ENCODE measurements at regions of chr16 and their contacts with region 1.

Region 1: GRCh38 chr16:3443108-3444031 is at the starts of genes NAA60 and ZNF597:
- DNase-seq: peak; percentile 84
- H3K4me3 ChIP-seq: peak within 1 kb of the TSS; percentile 63
- CTCF ChIP-seq: no peak

Region 2: GRCh38 chr16:3389663-3390338 is 53.6 kb before region 1 on chr16:
- in situ Hi-C with region 1: no loop called
- DNase-seq: no peak
- H3K4me3 ChIP-seq: no peak overlapping the region
- CTCF ChIP-seq: no peak

Region 3: DNA sequence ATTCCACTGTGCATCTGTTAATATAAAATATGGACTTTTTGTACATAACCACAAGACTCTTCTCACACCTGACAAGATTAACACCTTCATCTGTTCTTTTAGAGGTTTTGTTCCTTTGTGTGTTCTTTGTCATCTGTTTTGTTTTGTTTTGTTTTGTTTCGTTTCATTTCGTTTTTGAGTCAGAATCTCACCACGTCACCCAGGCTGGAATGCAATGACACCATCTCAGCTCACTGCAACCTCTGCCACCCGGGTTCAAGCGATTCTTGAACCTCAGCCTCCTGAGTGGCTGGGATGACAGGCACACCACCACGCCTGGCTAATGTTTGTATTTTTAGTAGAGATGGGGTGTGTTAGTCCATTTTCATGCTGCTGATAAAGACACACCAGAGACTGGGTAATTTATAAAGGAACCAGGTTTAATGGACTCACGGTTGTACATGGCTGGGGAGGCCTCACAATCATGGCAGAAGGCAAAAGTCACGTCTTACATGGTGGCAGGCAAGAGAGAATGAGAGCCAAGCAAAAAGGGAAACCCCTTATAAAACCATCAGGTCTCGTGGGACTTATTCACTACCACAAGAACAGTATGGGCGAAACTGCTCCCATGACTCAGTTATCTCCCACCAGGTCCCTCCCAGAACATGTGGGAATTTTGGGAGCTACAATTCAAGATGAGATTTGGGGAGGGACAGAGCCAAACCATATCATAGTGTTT is 29.7 kb after region 1 on chr16:
- in situ Hi-C with region 1: no loop called
- DNase-seq: no peak
- H3K4me3 ChIP-seq: no peak overlapping the region
- CTCF ChIP-seq: no peak

Region 4: GRCh38 chr16:3509470-3509928 is 66.1 kb after region 1 on chr16:
- in situ Hi-C with region 1: loop called (anchors 10 kb)
- DNase-seq: peak; percentile 15
- H3K4me3 ChIP-seq: no peak overlapping the region
- CTCF ChIP-seq: no peak

Region 5: DNA sequence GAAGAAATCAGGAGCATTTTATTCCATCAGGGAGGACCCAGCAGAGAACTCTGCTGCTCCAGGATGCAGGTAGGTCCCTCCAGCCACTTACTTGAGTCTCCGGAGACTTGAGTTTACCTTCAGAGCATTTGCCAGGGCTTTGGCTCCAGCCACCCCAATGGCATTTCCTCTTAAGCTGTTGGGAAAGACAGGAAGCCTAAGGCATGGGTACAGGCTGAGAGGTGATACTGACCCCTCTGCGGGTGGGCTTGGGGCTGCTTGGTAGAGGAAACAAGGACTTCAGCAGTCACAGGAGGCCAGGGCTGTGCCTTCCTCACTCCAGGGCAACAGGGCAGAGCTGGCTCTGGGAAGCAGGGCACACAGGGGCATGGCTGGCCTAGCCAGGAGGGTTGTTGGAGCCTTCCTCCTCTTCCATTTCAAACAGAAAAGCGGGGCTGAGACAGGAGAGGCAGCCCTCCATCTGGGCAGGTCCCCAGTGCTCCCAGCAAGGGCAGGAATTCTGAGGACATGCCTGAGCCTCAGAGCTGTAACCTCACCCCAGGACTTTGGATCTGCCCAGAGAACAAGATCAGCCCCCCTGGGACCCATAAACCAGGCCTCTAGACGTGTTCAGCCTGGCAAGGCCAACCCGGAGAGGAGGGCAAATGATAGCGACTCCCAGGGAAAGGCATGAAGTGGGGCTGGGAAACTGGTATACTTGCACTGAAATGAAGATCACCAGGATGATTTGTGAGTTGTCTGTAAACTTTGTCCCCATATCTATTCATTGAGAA is 99.4 kb after region 1 on chr16:
- in situ Hi-C with region 1: no loop called
- DNase-seq: no peak
- H3K4me3 ChIP-seq: no peak overlapping the region
- CTCF ChIP-seq: no peak